ENCODE measurements at regions of chr6 and their contacts with region 1.

Region 1: GRCh38 chr6:107957909-107958688 is at the start of gene SEC63:
- DNase-seq: peak; percentile 95
- ATAC-seq: peak; percentile 97
- H3K4me3 Mint-ChIP-seq: peak within 1 kb of the TSS; percentile 98
- H3K27ac Mint-ChIP-seq: peak within 1 kb of the TSS; percentile 94
- H3K4me1 Mint-ChIP-seq: peaks cover 27% of the 10 kb centered on the region
- H3K27me3 Mint-ChIP-seq: no peaks in the 10 kb centered on the region
- CTCF ChIP-seq: no peak
- total RNA-seq, gene SEC63: 64.4 and 68.3 TPM in 2 replicates

Region 2: GRCh38 chr6:107716688-107717089 is 241.4 kb before region 1 on chr6:
- CTCF ChIA-PET with region 1: no interaction called
- POLR2A ChIA-PET with region 1: no interaction called
- intact Hi-C with region 1: loop called (anchors 5 kb)
- DNase-seq: no peak
- ATAC-seq: peak; percentile 93
- H3K4me3 Mint-ChIP-seq: peak overlapping the region; percentile 86
- H3K27ac Mint-ChIP-seq: peak overlapping the region; percentile 93
- H3K4me1 Mint-ChIP-seq: peaks cover 28% of the 10 kb centered on the region
- H3K27me3 Mint-ChIP-seq: no peaks in the 10 kb centered on the region
- CTCF ChIP-seq: no peak

Region 3: DNA sequence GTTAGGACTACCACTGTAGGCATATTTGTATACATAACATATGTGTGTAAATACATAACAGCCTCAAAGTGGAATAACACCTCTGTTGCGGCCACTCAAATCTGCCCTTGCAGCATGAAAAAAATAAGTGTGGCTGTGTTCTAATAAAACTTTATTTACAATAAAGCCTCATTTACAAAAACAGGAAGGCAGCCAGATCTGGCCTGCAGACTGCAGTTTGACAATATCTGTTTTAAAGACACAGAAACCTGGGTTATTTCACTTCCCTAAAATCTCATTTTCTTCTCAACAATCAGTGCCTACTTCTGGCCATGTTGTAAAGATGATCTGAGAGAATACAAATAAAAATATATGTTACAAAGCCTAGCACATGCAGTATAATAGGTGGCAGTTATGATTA is 80.1 kb before region 1 on chr6:
- CTCF ChIA-PET with region 1: no interaction called
- POLR2A ChIA-PET with region 1: no interaction called
- intact Hi-C with region 1: loop called (anchors 5 kb)
- DNase-seq: no peak
- ATAC-seq: peak; percentile 68
- H3K4me3 Mint-ChIP-seq: no peak overlapping the region
- H3K27ac Mint-ChIP-seq: peak overlapping the region; percentile 75
- H3K4me1 Mint-ChIP-seq: peaks cover 15% of the 10 kb centered on the region
- H3K27me3 Mint-ChIP-seq: no peaks in the 10 kb centered on the region
- CTCF ChIP-seq: no peak

Region 4: GRCh38 chr6:108074359-108075144 is 116.5 kb after region 1 on chr6 and contains the start of gene OSTM1:
- CTCF ChIA-PET with region 1: no interaction called
- POLR2A ChIA-PET with region 1: no interaction called
- intact Hi-C with region 1: loop called (anchors 1 kb)
- DNase-seq: peak; percentile 98
- ATAC-seq: peak; percentile 96
- H3K4me3 Mint-ChIP-seq: peak within 1 kb of the TSS; percentile 87
- H3K27ac Mint-ChIP-seq: peak within 1 kb of the TSS; percentile 89
- H3K4me1 Mint-ChIP-seq: peaks cover 32% of the 10 kb centered on the region
- H3K27me3 Mint-ChIP-seq: peaks cover 2% of the 10 kb centered on the region
- CTCF ChIP-seq: no peak
- total RNA-seq, gene OSTM1: 17.6 and 21.4 TPM in 2 replicates

Region 5: DNA sequence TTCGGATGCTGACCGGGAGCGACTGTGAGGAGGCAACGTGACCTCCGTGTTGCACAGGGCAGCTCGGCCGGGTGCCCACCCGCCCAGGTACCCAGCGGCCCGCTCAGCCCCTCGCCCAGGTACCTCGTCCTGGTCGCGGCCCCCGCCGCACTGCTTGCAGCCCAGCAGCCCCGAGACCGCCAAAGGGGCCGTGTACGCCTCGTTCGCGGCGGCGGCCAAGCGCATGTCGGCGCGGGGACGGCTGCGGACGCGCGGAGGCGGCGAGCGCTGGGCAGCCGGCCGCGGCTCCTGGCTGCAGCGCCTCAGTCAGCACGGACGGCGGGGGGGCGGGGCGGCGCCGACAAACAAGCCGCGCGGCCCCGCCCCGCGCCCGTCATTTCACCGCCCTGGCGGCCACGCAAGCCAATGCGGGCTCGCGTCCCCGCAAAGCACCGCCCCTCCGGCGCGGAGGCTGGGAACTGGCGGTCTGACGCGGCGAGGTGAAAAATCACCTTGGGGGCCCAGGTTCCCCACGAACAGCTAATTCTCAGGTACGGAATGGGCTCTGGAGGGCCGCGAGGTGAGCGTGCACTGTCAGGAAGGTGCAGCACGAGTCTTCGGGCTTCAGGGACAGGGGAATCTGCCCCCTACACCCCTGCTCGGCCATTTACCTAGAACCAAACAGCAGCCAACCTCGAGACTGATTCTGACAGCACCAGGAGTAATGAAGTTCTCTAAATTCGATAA is 1051.3 kb after region 1 on chr6:
- CTCF ChIA-PET with region 1: no interaction called
- POLR2A ChIA-PET with region 1: no interaction called
- intact Hi-C with region 1: loop called (anchors 10 kb)
- DNase-seq: peak; percentile 87
- ATAC-seq: peak; percentile 97
- H3K4me3 Mint-ChIP-seq: peak overlapping the region; percentile 97
- H3K27ac Mint-ChIP-seq: peak overlapping the region; percentile 95
- H3K4me1 Mint-ChIP-seq: peaks cover 65% of the 10 kb centered on the region
- H3K27me3 Mint-ChIP-seq: no peaks in the 10 kb centered on the region
- CTCF ChIP-seq: no peak

Measured in activated B cell treated with CpG ODN at 0.5 μM for 24 hours (primary cell).